IMR-90 (cell line): ENCODE measurements at regions of chr15 and their contacts with region 1.

Region 1: GRCh38 chr15:72671535-72671934 is 14.4 kb downstream of the HIGD2B start:
- DNase-seq: no peak
- ATAC-seq: no peak
- H3K4me3 ChIP-seq: no peak overlapping the region
- H3K27ac ChIP-seq: no peak overlapping the region
- H3K4me1 ChIP-seq: peaks cover 1% of the 10 kb centered on the region; the same call in 1 of the 2 replicates
- H3K27me3 ChIP-seq: peaks cover 10% of the 10 kb centered on the region
- CTCF ChIP-seq: no peak
- POLR2A ChIP-seq: no peak
- RAD21 ChIP-seq: no peak

Region 2: DNA sequence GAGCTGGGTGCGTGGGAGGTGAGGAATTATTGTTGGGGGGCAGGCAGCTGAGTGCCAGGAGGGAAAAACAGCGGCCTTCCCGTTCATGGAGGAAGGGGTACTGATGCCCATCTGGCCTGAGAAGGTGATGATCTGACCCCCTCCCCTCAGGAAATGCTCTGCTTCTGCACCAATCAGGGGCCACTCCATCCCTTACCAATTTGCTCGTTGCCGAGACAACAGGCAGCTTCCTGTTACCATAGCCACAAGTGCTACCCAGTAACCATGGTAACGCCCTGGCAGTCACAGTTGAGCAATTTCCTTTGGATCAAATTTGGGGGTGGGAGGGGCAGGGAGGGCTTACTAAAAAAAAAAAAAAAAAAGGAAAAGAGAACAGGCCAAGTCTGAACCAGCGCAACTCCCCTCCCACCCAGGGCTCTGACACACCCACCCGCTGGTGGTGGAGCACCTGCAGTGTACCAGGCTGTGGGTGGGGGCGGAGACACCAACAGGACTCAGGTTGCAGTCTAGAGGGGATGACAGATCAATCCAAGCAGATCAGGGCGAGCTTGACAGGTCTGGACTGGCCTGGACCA is 365.2 kb before region 1 on chr15:
- CTCF ChIA-PET with region 1: no interaction called
- POLR2A ChIA-PET with region 1: no interaction called
- dilution Hi-C with region 1: no loop called
- in situ Hi-C with region 1: loop called (anchors 10 kb)
- intact Hi-C with region 1: no loop called
- DNase-seq: peak; percentile 32
- ATAC-seq: no peak
- H3K4me3 ChIP-seq: no peak overlapping the region
- H3K27ac ChIP-seq: no peak overlapping the region
- H3K4me1 ChIP-seq: peaks cover 3% of the 10 kb centered on the region; the same call in 1 of the 2 replicates
- H3K27me3 ChIP-seq: peaks cover 20% of the 10 kb centered on the region
- CTCF ChIP-seq: no peak
- POLR2A ChIP-seq: no peak
- RAD21 ChIP-seq: no peak

Region 3: DNA sequence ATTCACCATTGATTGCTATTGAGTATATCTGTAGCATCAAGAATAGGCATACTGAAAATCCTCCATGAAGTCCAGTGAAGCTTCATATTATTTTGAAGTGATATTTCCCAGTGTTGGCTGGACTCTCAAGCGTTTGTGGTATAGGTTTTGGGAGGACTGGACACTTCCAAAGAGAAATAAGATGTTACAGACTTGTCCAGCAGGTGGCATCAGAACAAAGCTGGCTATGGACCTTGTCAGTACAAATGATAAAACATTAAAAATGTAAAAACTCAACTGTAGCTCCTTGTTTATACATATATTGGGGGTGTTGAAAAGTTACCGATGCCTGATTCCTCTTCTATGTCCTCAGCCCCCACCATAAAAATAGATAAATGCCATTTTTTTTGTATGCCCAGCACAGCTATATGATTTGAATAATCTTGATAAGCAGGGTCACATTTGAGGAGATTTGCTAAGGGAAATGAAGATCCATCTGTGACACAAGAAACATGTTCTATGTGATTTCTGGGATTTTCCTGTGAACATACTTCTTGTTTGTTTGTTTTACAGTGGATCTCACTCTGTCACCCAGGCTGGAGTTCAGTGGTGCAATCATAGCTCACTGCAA is 71.6 kb before region 1 on chr15:
- CTCF ChIA-PET with region 1: interaction called, 8 read pairs
- POLR2A ChIA-PET with region 1: no interaction called
- dilution Hi-C with region 1: no loop called
- in situ Hi-C with region 1: no loop called
- intact Hi-C with region 1: loop called (anchors 2 kb)
- DNase-seq: peak; percentile 68
- ATAC-seq: peak; percentile 90
- H3K4me3 ChIP-seq: no peak overlapping the region
- H3K27ac ChIP-seq: no peak overlapping the region
- H3K4me1 ChIP-seq: no peaks in the 10 kb centered on the region
- H3K27me3 ChIP-seq: 0 out of 2 replicates have a peak, but pooled peaks cover 2% of the 10 kb centered on the region
- CTCF ChIP-seq: peak; percentile 68
- POLR2A ChIP-seq: no peak
- RAD21 ChIP-seq: peak; percentile 67

Region 4: DNA sequence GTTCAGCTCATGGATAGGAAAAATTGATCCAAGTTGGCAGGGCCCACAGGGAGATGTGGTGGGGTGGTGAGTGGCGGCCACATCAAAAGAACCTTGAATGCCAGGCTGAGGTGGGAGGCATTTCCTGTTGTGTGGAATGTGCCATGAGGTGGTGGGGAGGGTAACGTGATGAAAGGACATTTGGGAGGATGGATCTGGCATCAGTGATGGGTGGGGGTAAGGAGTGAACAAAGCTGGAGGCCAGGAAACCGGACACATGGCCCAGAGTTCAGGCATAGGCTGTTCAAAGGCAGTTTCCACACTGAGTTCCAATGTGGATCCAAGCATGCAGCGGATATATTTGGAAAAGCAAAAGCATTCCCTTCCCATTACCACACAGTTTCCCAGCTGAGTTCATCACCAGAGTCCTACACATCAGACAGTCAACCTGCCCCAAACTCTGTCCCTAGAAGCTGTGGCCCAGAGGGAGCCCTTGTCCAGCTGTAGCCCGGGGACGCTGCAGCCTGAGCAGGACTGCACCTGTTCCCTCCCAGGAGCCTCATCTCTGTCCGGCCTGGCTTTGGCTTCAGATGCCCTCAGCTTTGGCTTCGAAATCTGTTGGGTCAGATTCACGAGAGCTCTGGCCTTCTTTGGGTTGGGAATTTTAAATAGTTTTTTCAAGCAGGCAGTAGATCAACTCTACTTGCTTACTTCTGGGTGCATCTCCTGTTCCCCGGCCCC is 54.9 kb before region 1 on chr15:
- CTCF ChIA-PET with region 1: no interaction called
- POLR2A ChIA-PET with region 1: no interaction called
- dilution Hi-C with region 1: no loop called
- in situ Hi-C with region 1: loop called (anchors 10 kb)
- intact Hi-C with region 1: no loop called
- DNase-seq: no peak
- ATAC-seq: no peak
- H3K4me3 ChIP-seq: no peak overlapping the region
- H3K27ac ChIP-seq: no peak overlapping the region
- H3K4me1 ChIP-seq: no peaks in the 10 kb centered on the region
- H3K27me3 ChIP-seq: peaks cover 4% of the 10 kb centered on the region; the same call in 1 of the 2 replicates
- CTCF ChIP-seq: no peak
- POLR2A ChIP-seq: no peak
- RAD21 ChIP-seq: no peak